Gastrocnemius medialis (tissue), 4 donors: ENCODE measurements at regions of chr1 and their contacts with region 1.

Region 1: GRCh38 chr1:178869119-178869697 is 1.7 kb downstream of the ANGPTL1 start:
- DNase-seq: no peak
- ATAC-seq: peak; percentile 78 to 81
- H3K4me3 ChIP-seq: peak overlapping the region; percentile 54 to 63 (median 58)
- H3K27ac ChIP-seq: peak overlapping the region; percentile 76 to 84 (median 82)
- H3K4me1 ChIP-seq: peaks cover 36 to 49% of the 10 kb centered on the region in 2 donors
- H3K27me3 ChIP-seq: no peaks in the 10 kb centered on the region
- CTCF ChIP-seq: peak in 1 of 5 experiments; percentile 16
- POLR2A ChIP-seq: peak in 1 of 2 donors; percentile 12

Region 2: GRCh38 chr1:178518894-178519293 is 350.3 kb before region 1 on chr1:
- in situ Hi-C with region 1: no loop called
- intact Hi-C with region 1: no loop called
- DNase-seq: no peak
- ATAC-seq: no peak
- H3K4me3 ChIP-seq: no peak overlapping the region
- H3K27ac ChIP-seq: no peak overlapping the region
- H3K4me1 ChIP-seq: no peaks in the 10 kb centered on the region
- H3K27me3 ChIP-seq: no peaks in the 10 kb centered on the region
- CTCF ChIP-seq: no peak
- POLR2A ChIP-seq: no peak

Region 3: DNA sequence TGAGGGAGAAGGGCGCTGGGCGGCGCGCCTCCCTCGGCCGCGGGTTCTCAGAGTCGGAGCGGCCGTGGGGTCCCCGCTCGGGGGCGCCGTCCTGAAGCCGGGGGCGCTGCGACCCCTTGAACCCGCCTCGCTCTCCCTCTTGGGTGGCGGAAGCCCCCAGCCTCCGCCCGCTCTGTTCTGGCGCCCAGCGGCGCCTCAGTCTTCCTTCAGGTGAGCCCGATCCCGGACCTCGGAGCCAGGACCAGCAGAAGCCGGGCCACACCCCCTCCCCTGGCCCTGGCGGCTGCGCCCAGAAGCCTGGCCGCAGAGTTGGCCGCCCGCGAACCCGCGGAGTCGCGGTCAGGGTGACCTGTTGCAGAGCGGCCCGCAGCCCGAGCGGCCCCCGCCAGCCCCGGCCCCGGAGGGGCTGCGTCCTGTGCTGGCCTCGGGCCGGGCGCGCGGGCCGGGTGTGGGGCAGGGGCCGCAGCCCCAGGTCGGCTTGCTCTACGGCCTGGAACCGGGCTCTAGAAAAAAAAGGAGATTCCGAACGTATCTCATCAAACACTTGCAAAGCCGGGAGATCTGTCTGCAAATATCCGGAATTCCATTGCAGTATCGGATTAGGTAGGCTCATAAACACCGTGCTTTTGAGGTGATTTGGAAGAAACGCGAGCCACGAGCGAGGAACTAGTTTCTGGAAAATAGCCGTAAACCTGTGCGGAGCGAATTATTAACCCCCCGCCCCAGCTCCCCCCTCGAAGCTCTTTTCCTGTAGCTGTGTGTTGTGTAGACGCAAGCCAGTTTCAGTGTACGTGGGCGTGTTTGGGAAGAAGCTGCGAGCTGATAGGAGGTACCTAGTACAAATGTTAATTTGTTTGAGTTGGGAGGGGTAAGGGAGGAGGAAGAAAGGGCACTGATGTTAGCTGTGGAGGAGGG is 143.3 kb before region 1 on chr1:
- in situ Hi-C with region 1: no loop called
- intact Hi-C with region 1: loop called (anchors 5 kb)
- DNase-seq: peak; percentile 41 to 59
- ATAC-seq: peak; percentile 79 to 84
- H3K4me3 ChIP-seq: peak overlapping the region; percentile 68 to 95 (median 80)
- H3K27ac ChIP-seq: peak overlapping the region; percentile 62 to 73 (median 63)
- H3K4me1 ChIP-seq: peaks cover 0 to 7% of the 10 kb centered on the region in 2 donors
- H3K27me3 ChIP-seq: no peaks in the 10 kb centered on the region
- CTCF ChIP-seq: no peak
- POLR2A ChIP-seq: peak in 1 of 2 donors; percentile 26

Region 4: DNA sequence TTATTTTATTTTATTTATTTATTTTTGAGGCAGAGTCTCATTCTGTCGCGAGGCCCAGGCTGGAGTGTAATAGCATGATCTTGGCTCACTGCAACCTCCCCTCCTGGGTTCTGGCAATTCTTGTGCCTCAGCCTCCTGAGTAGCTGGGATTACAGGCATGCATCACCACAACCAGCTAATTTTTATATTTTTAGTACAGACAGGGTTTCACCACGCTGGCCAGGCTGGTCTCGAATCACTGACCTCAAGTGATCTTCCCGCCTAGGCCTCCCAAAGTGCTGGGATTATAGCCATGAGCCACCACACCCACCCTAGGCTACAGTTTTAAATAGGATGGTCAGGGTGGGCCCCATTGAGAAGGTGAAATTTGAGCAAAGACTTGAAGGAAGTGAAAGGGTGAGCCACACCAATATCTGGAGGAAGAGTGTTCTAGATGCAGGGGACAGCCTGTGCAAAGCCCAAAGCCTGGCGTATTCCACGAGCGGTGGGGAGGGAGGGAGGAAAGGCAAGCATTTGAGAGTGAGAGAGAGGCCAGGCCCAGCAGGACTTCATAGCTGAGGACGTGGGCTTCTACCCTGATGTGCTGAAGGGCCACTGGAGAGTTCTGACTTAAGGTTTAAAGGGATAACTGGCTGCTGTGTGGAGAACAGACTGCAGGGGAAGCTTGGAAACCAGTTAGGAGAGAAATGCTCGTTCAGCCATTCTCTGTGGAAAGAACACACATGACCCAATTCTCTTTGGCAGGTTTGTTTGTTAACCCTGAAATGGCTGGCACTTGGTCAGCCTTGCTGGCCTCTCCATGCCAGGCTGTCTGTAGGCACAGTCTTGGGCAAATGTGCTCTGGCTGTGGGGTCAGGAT is 93.9 kb after region 1 on chr1:
- in situ Hi-C with region 1: no loop called
- intact Hi-C with region 1: no loop called
- DNase-seq: peak in 1 of 2 donors; percentile 37
- ATAC-seq: peak; percentile 51 to 65
- H3K4me3 ChIP-seq: no peak overlapping the region
- H3K27ac ChIP-seq: peak overlapping the region; percentile 9 to 43 (median 36)
- H3K4me1 ChIP-seq: peaks cover 6 to 7% of the 10 kb centered on the region in 2 donors
- H3K27me3 ChIP-seq: no peaks in the 10 kb centered on the region
- CTCF ChIP-seq: no peak
- POLR2A ChIP-seq: no peak

Region 5: DNA sequence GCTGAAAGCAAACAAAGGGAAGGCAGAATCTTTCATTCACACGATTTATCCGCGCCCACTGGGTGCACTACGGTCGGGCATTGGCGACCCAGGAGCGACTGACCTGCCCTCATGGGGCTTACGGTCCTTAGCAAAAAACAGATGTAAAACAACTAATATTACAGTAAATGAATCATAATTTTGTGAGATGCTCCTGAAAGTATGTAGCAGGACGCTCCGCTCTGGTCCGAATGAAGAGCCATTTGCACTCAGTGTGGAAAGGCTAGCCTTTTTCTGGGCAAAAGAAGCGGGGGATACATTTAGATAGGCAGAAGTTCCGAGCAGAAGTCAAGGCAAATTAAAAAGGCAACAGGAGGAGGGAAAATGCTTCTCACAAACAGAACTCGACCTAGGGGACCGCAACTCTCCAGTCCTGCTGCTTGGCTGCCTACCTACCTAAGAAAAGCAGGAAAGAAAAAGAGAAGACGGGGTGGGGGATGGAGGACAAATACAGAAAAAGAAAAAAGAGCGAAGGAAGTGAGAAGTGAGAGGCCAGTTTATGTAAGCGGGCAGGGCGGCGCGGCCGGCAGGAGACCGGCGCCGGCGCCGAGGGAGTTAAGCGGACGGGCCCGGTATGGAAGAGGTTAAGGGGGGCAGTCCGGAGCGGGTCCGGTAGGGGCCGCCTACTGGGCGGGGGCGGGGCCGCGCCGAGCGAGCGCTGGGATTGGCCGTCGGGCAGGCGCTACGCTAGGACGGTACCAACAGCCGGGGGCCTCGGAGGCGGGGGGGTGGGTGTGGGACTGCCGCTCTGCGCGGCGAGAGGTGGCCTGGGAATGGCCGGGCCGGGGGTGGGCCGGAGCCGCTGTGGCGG is 156.1 kb after region 1 on chr1 and contains the start of gene FAM20B:
- in situ Hi-C with region 1: no loop called
- intact Hi-C with region 1: loop called (anchors 10 kb)
- DNase-seq: peak; percentile 91 to 94
- ATAC-seq: peak; percentile 79 to 86
- H3K4me3 ChIP-seq: peak within 1 kb of the TSS; percentile 77 to 99 (median 89)
- H3K27ac ChIP-seq: peak within 1 kb of the TSS; percentile 92 to 99 (median 98)
- H3K4me1 ChIP-seq: peaks cover 30 to 44% of the 10 kb centered on the region in 2 donors
- H3K27me3 ChIP-seq: no peaks in the 10 kb centered on the region
- CTCF ChIP-seq: peak in 1 of 5 experiments; percentile 25
- POLR2A ChIP-seq: no peak
- total RNA-seq, gene FAM20B: 19.7 to 43.7 (median 32.6) TPM

Region 6: GRCh38 chr1:179169616-179170467 is 300.6 kb after region 1 on chr1:
- in situ Hi-C with region 1: no loop called
- intact Hi-C with region 1: no loop called
- DNase-seq: no peak
- ATAC-seq: peak; percentile 33 to 72
- H3K4me3 ChIP-seq: no peak overlapping the region
- H3K27ac ChIP-seq: peak overlapping the region in 2 of 4 donors; percentile 23 to 38
- H3K4me1 ChIP-seq: peaks cover 7 to 8% of the 10 kb centered on the region in 2 donors
- H3K27me3 ChIP-seq: no peaks in the 10 kb centered on the region
- CTCF ChIP-seq: no peak
- POLR2A ChIP-seq: no peak